H1 (cell line): ENCODE measurements at regions of chr22 and their contacts with region 1.

Region 1: DNA sequence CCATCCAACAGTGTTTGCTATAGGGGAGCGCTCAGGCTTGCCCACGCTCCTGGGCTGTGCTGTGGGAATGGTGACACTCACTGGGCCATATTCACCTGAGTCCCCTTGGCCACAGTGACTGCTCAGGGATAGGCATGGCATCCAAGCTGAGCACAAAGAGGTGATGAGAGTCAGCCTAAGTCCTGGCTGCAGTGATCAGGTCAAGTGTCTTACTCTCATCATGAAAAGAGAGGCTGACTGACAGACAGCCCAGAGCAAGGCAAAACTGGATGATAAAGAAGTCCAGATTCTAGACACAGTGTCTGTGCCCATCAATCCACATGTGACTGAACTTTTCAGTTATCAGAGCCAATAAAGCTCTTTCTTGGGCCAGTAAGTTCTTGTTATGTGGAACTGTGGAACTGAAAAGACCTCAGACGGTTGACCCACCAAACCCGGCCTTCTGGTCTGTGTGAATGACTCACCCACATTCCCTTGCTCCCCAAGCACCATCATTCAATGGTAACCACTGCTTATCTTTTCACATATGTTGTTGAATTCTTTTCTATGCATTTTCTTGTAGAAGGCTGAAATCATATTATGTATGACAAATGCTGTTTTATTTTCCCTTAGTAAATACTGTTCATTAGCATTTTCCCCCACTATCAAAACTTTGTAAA is 43.2 kb upstream of the YPEL1 start:
- DNase-seq: no peak
- H3K4me3 ChIP-seq: no peak overlapping the region
- H3K27ac ChIP-seq: no peak overlapping the region
- H3K4me1 ChIP-seq: no peaks in the 10 kb centered on the region
- H3K27me3 ChIP-seq: no peaks in the 10 kb centered on the region
- CTCF ChIP-seq: no peak
- EP300 ChIP-seq: no peak
- POLR2A ChIP-seq: no peak
- RAD21 ChIP-seq: no peak

Region 2: DNA sequence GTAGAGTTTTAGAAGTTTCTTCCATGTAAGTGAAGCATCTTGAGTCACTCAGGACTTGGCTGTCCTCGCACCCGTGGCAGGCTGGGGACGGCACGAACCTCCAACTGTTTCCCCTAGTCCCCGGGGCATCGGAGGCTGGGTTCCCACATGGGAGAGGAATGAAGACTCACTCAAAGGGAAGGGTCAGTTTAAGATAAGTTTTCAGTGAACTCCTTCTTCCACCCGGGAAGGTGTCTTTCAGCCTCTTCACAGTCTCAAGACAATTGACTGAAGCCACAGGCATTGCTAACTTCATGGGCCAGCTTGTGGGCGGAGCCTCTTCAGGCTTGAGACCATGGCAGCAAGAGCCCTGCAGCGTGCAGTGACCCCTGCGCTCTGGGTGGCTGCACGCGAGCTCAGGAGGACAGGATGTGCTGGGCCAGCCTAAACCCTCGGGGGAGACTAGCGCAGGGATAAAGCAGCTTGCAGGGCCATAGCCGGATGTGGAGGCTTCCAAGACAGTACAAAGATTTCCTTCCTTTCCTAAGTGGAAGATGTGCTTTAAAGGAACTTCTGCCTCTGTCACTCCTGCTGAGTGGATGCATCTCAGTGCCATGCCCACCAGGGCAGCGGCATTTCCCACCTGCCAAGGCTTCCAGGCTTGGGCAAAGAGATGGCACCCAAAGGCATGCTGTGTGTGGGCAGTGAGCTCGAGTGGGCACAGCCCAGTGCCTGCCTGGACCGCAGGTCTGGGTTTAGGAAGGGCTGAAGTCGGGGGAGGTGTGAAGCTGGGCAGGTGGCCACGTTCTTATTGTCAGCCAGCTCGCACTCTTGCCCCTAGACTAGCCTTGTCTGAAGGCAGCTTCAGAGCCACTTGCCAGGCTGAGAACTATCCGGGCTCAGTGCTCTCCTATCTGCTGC is 80.2 kb before region 1 on chr22:
- CTCF ChIA-PET with region 1: no interaction called
- POLR2A ChIA-PET with region 1: no interaction called
- DNase-seq: no peak
- H3K4me3 ChIP-seq: no peak overlapping the region
- H3K27ac ChIP-seq: no peak overlapping the region
- H3K4me1 ChIP-seq: no peaks in the 10 kb centered on the region
- H3K27me3 ChIP-seq: no peaks in the 10 kb centered on the region
- CTCF ChIP-seq: no peak
- EP300 ChIP-seq: no peak
- POLR2A ChIP-seq: no peak
- RAD21 ChIP-seq: no peak

Region 3: GRCh38 chr22:21762712-21763581 is 15.9 kb before region 1 on chr22:
- CTCF ChIA-PET with region 1: interaction called, 11 read pairs
- POLR2A ChIA-PET with region 1: no interaction called
- DNase-seq: no peak
- H3K4me3 ChIP-seq: no peak overlapping the region
- H3K27ac ChIP-seq: no peak overlapping the region
- H3K4me1 ChIP-seq: no peaks in the 10 kb centered on the region
- H3K27me3 ChIP-seq: no peaks in the 10 kb centered on the region
- CTCF ChIP-seq: no peak
- EP300 ChIP-seq: no peak
- POLR2A ChIP-seq: no peak
- RAD21 ChIP-seq: no peak